GM12878 (cell line): ENCODE measurements at regions of chrX and their contacts with region 1.

Region 1: DNA sequence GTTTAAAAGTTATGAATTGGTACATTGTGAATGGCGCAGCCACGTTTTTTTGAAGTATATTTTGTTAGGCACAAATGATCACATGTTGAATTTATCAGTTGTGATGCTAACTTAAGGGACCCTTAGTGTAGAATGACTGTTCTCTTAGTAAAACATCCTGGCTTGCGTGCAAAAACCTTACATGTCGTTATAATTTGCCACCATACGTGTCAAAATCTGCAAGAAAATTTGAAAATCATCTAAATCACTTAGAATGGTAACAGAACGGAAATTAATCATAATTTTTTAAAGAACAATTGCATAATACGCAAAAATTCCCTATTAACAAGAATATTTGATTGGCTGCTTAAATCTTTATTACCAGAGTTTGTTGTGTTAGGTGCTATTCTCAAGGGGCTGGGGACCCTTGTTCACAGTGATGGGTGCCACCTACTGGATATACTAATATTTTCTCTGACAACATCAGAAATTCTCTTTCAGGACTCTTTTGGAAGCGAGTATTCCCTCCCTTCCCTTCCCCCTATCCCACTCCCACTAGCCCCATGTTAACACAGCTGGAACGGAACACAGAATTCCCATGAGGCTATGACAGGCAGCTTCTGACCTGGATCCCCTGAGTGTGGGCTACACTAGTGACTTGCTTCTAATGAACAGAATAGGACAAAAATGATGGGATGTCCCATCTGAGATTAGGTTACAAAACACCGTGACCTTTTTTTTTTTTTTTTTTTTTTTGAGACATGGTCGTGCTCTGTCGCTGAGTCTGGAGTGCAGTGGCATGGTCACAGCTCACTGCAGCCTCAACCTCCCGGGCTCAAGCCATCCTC is 71.8 kb downstream of the SUPT20HL2 start:
- DNase-seq: no peak
- ATAC-seq: peak; percentile 60
- H3K4me3 ChIP-seq: no peak overlapping the region
- H3K27ac ChIP-seq: peak overlapping the region; percentile 43
- H3K4me1 ChIP-seq: 0 out of 2 replicates have a peak, but pooled peaks cover 3% of the 10 kb centered on the region
- H3K27me3 ChIP-seq: no peaks in the 10 kb centered on the region
- CTCF ChIP-seq: peak; percentile 35 to 63 (median 42); a peak in 4 of 6 replicates
- EP300 ChIP-seq: no peak
- POLR2A ChIP-seq: no peak
- RAD21 ChIP-seq: peak; percentile 67

Region 2: GRCh38 chrX:23694606-23695005 is 547.4 kb before region 1 on chrX:
- CTCF ChIA-PET with region 1: no interaction called
- POLR2A ChIA-PET with region 1: no interaction called
- RAD21 ChIA-PET with region 1: interaction called, 3 read pairs
- SMC1A ChIA-PET with region 1: no interaction called
- in situ Hi-C with region 1: no loop called
- intact Hi-C with region 1: loop called (anchors 10 kb)
- DNase-seq: peak; percentile 11
- ATAC-seq: peak; percentile 90
- H3K4me3 ChIP-seq: no peak overlapping the region
- H3K27ac ChIP-seq: no peak overlapping the region
- H3K4me1 ChIP-seq: no peaks in the 10 kb centered on the region
- H3K27me3 ChIP-seq: no peaks in the 10 kb centered on the region
- CTCF ChIP-seq: peak; percentile 37 to 70 (median 63); a peak in 5 of 6 replicates
- EP300 ChIP-seq: no peak
- POLR2A ChIP-seq: no peak
- RAD21 ChIP-seq: peak; percentile 76

Region 3: GRCh38 chrX:24054182-24055042 is 187.6 kb before region 1 on chrX and contains the start of gene EIF2S3:
- CTCF ChIA-PET with region 1: interaction called, 16 read pairs
- POLR2A ChIA-PET with region 1: interaction called, 6 read pairs
- RAD21 ChIA-PET with region 1: interaction called, 38 read pairs
- SMC1A ChIA-PET with region 1: interaction called, 13 read pairs
- in situ Hi-C with region 1: no loop called
- intact Hi-C with region 1: loop called (anchors 1 kb)
- DNase-seq: peak; percentile 88
- ATAC-seq: peak; percentile 91
- H3K4me3 ChIP-seq: peak within 1 kb of the TSS; percentile 72
- H3K27ac ChIP-seq: peak within 1 kb of the TSS; percentile 97
- H3K4me1 ChIP-seq: no peaks in the 10 kb centered on the region
- H3K27me3 ChIP-seq: no peaks in the 10 kb centered on the region
- CTCF ChIP-seq: peak; percentile 64 to 80 (median 74)
- EP300 ChIP-seq: peak; percentile 34 to 66; a peak in 3 of 4 replicates
- POLR2A ChIP-seq: peak; percentile 99
- RAD21 ChIP-seq: peak; percentile 41
- polyA plus RNA-seq, gene EIF2S3: 120 to 135 TPM

Region 4: GRCh38 chrX:24150051-24150790 is 91.8 kb before region 1 on chrX:
- CTCF ChIA-PET with region 1: interaction called, 3 read pairs
- POLR2A ChIA-PET with region 1: no interaction called
- RAD21 ChIA-PET with region 1: interaction called, 10 read pairs
- SMC1A ChIA-PET with region 1: interaction called, 3 read pairs
- in situ Hi-C with region 1: no loop called
- intact Hi-C with region 1: loop called (anchors 5 kb)
- DNase-seq: peak; percentile 55
- ATAC-seq: peak; percentile 83
- H3K4me3 ChIP-seq: peak overlapping the region; percentile 88
- H3K27ac ChIP-seq: peak overlapping the region; percentile 80
- H3K4me1 ChIP-seq: peaks cover 22% of the 10 kb centered on the region
- H3K27me3 ChIP-seq: no peaks in the 10 kb centered on the region
- CTCF ChIP-seq: peak; percentile 22 to 49 (median 37); a peak in 5 of 6 replicates
- EP300 ChIP-seq: 0 out of 4 replicates have a peak, but pooled peaks of 1 of the 2 experiments have one; percentile 10
- POLR2A ChIP-seq: peak; percentile 88
- RAD21 ChIP-seq: peak; percentile 2; the same call in 1 of the 2 replicates

Region 5: DNA sequence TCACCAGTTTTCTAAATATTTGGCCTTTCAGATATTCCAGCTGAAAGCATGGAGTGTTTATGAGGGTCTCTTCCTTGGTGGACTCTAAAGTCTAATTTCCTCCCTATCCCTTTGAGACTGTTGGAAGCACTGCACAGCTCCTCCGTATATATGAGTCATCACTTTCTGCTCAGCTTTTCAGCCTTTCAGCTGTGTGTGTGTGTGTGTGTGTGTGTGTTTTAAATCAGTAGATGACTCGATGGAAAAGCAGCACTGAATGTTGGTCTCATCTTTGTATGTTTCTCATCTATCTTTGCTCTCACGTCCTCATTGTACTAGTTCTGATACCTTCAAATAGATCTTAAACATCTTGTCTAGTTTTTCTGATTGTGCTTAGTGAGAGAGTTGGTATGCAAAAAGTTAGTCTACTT is 10.9 kb before region 1 on chrX:
- CTCF ChIA-PET with region 1: interaction called, 26 read pairs
- POLR2A ChIA-PET with region 1: interaction called, 6 read pairs
- RAD21 ChIA-PET with region 1: interaction called, 8 read pairs
- SMC1A ChIA-PET with region 1: interaction called, 13 read pairs
- in situ Hi-C with region 1: no loop called
- intact Hi-C with region 1: no loop called
- DNase-seq: no peak
- ATAC-seq: peak; percentile 57
- H3K4me3 ChIP-seq: no peak overlapping the region
- H3K27ac ChIP-seq: peak overlapping the region; percentile 43
- H3K4me1 ChIP-seq: peaks cover 13% of the 10 kb centered on the region
- H3K27me3 ChIP-seq: no peaks in the 10 kb centered on the region
- CTCF ChIP-seq: no peak
- EP300 ChIP-seq: no peak
- POLR2A ChIP-seq: no peak
- RAD21 ChIP-seq: no peak

Region 6: DNA sequence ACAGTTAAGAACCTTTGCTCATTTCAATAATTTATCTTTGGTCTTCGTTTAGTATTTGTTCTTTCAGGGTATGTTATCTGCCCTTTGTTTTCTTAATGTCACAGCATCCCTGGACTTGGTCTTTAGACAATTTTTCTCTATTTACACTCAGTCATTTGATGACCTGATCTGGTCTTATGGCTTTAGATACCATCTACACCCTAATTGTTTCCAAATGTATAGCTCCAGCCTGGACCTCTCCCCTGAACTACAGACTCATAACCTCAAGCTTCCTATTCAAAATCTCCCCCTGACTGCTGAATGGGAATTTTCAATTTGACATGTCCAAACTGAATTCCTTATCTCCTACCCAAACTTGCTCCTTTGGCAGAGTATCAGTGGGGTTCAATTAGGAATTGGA is 75.5 kb after region 1 on chrX:
- CTCF ChIA-PET with region 1: no interaction called
- POLR2A ChIA-PET with region 1: no interaction called
- RAD21 ChIA-PET with region 1: no interaction called
- SMC1A ChIA-PET with region 1: no interaction called
- in situ Hi-C with region 1: no loop called
- intact Hi-C with region 1: no loop called
- DNase-seq: no peak
- ATAC-seq: no peak
- H3K4me3 ChIP-seq: no peak overlapping the region
- H3K27ac ChIP-seq: no peak overlapping the region
- H3K4me1 ChIP-seq: no peaks in the 10 kb centered on the region
- H3K27me3 ChIP-seq: no peaks in the 10 kb centered on the region; a peak in 1 of 4 replicates
- CTCF ChIP-seq: no peak
- EP300 ChIP-seq: no peak
- POLR2A ChIP-seq: no peak
- RAD21 ChIP-seq: no peak